MCF 10A (cell line): ENCODE measurements at regions of chr1 and their contacts with region 1.

Region 1: DNA sequence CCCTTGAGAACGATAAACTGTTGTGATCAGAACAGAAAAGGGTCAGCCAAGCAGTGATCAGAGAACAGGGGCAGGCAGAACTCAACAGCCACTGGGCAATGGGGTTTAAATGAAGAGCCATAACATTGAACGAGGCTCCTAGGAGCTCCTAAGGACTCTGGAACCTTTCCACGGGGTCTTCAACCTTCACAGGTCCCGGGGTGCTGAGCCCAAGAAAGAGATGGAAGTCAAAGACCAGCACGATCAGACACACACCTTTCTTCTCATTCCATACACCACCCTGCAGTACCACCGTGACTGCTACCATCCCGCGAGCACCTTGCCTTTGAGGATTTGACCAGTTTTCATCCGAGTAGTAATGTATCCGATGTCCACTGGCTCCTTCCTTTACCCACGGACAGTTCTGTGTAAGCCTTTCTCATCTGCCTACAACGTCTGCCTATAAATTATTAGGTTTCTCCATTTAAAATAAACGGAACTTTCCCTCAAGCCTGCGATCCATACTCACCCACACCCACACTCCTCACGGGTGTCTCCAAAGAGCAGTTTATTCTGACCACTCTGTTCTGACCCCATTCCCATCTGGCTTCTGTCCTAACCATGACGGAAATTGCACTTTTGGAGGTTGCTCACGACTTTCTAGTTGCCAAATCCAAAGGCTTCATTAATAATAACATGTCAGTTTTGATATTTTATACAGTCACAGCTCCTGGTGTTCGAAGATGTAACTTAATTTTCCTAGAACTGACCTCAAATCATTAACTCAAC is 16.8 kb upstream of the HHAT start:
- DNase-seq: no peak
- H3K4me3 Mint-ChIP-seq: no peak overlapping the region
- H3K27ac Mint-ChIP-seq: no peak overlapping the region
- H3K4me1 Mint-ChIP-seq: peaks cover 6% of the 10 kb centered on the region
- H3K27me3 Mint-ChIP-seq: peaks cover 36% of the 10 kb centered on the region
- CTCF ChIP-seq: no peak

Region 2: GRCh38 chr1:210024996-210025395 is 286.9 kb before region 1 on chr1:
- CTCF ChIA-PET with region 1: interaction called, 9 read pairs
- POLR2A ChIA-PET with region 1: no interaction called
- intact Hi-C with region 1: loop called (anchors 5 kb)
- DNase-seq: no peak
- H3K4me3 Mint-ChIP-seq: no peak overlapping the region
- H3K27ac Mint-ChIP-seq: no peak overlapping the region
- H3K4me1 Mint-ChIP-seq: no peaks in the 10 kb centered on the region
- H3K27me3 Mint-ChIP-seq: peaks cover 29% of the 10 kb centered on the region
- CTCF ChIP-seq: no peak

Region 3: DNA sequence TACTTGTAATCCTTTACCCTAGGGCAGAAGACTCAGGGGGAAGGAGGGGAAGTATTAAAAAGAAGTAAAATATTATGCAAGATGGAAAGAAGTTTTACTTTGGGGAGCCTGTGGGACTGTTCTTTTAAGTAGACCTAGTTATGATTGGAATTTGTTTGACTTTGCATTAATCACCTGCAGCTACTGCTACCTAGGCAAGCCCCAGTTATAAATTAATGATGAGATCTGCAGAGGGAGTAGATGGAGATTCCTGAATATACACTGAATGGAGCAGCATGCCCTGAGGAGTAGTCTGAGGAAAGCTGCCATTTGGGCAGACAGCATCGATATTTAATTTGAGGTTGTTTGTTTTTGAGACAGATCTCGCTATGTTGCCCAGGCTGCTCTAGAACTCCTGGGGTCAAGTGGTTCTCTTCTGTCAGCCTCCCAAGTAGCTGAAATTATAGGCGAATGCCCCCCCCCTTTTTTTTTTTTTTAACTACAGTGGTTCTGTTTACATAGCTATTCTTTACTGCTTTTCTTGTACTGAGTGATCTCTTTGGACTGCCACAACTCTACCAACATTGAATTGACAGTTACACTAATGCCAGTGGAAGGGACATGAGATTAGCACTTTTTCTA is 160.7 kb before region 1 on chr1:
- CTCF ChIA-PET with region 1: interaction called, 36 read pairs
- POLR2A ChIA-PET with region 1: interaction called, 4 read pairs
- intact Hi-C with region 1: no loop called
- DNase-seq: no peak
- H3K4me3 Mint-ChIP-seq: no peak overlapping the region
- H3K27ac Mint-ChIP-seq: no peak overlapping the region
- H3K4me1 Mint-ChIP-seq: peaks cover 6% of the 10 kb centered on the region
- H3K27me3 Mint-ChIP-seq: no peaks in the 10 kb centered on the region
- CTCF ChIP-seq: no peak

Region 4: DNA sequence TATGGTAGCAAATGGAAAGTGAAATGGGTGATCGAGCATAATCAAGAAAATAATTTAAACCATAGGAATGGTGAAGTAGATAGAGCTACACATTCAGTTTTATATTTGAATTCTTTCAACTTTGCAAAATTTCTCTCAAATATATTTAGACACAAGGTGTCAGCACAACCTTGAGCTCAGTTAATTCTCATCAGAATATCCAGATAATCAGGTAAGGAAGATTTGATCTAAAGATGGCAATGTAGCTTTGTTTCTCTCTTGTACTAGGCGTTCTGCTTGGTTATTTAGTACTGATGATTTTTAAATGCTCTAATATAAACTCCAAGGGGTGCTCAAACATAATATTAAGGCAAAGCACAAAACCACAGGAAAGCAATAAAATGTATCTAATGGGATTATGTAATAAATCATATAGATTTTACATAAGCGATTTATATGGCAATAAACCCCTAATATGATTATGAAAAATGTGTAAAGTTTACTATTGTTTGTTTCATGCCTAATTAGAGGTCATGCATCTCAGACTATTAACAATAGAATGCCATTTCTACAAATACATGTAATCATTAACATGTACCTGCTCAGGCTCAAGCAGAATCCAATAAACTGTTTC is 111.7 kb before region 1 on chr1:
- CTCF ChIA-PET with region 1: interaction called, 41 read pairs
- POLR2A ChIA-PET with region 1: interaction called, 3 read pairs
- intact Hi-C with region 1: loop called (anchors 1 kb)
- DNase-seq: peak; percentile 28
- H3K4me3 Mint-ChIP-seq: no peak overlapping the region
- H3K27ac Mint-ChIP-seq: no peak overlapping the region
- H3K4me1 Mint-ChIP-seq: peaks cover 6% of the 10 kb centered on the region
- H3K27me3 Mint-ChIP-seq: peaks cover 6% of the 10 kb centered on the region
- CTCF ChIP-seq: peak; percentile 26

Region 5: DNA sequence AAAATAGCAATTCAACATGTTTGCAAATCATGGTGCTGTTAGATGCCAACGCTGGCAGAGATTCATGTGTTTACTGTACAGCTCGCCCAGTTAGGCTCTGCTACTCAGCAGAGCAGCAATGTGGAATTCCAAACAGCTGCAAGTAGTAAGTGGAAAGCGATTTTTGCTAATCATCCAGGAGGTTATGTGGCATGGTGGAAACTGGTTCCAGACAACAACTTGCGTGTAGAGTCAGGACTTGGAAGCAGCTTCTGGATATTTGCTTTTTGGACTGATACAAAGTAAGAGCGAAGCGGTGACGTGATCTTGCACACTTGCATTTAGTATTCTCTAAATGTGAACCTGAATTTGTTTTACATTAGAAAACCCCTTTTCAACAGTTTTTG is 10.3 kb before region 1 on chr1:
- CTCF ChIA-PET with region 1: interaction called, 62 read pairs
- POLR2A ChIA-PET with region 1: interaction called, 5 read pairs
- intact Hi-C with region 1: no loop called
- DNase-seq: no peak
- H3K4me3 Mint-ChIP-seq: no peak overlapping the region
- H3K27ac Mint-ChIP-seq: no peak overlapping the region
- H3K4me1 Mint-ChIP-seq: peaks cover 12% of the 10 kb centered on the region
- H3K27me3 Mint-ChIP-seq: peaks cover 20% of the 10 kb centered on the region
- CTCF ChIP-seq: no peak

Region 6: DNA sequence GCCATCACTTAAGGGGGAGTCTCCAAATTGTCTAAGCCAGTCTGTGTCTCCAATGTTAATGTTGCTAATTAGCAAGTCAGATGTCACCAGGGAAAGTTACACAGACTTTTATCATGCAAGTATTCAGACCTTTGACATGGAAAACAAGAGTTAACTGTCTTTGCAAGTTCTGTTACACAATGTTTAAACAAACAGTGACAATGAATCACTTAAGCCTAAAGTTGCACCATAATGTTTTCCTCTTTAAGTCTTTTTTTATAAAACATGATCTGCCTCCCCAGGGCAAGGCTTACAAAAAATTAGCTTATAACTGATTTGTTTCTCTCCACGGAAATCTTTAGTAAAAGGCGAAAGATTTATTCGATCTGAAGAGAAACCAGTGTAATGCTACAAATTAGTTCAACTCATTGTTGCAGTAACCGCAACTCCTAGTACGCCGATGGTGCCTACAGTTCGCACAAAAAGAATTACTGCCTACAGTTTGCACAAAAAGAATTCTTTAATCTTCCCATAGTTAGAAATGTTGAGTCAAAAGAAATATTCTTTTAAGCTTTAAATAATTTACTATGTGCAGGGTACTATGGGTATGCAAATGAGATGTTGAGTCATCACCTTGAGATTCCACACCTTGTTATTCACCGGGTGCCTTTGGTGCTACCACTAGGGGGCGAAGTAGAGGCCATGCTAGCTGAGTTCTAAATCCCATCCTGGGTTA is 62.1 kb after region 1 on chr1:
- CTCF ChIA-PET with region 1: interaction called, 17 read pairs
- POLR2A ChIA-PET with region 1: interaction called, 5 read pairs
- intact Hi-C with region 1: no loop called
- DNase-seq: peak; percentile 100
- H3K4me3 Mint-ChIP-seq: peak overlapping the region; percentile 57
- H3K27ac Mint-ChIP-seq: peak overlapping the region; percentile 100
- H3K4me1 Mint-ChIP-seq: peaks cover 47% of the 10 kb centered on the region
- H3K27me3 Mint-ChIP-seq: no peaks in the 10 kb centered on the region
- CTCF ChIP-seq: peak; percentile 100